Activated T-helper 2 cell treated with anti-CD3 and anti-CD28 coated beads, Interferon-gamma antibody, Interleukin-2, Interleukin-4, amounts not matched to agents 10 μg/mL and 5 μg/mL and 100 μg/mL, durations not matched to agents 14 hours and 24 hours and 36 hours (primary cell): ENCODE measurements at regions of chr5 and their contacts with region 1.

Region 1: GRCh38 chr5:61331407-61332357 is at the start of gene ZSWIM6:
- DNase-seq: peak; percentile 96
- H3K4me3 Mint-ChIP-seq: peak within 1 kb of the TSS; percentile 95
- H3K27ac Mint-ChIP-seq: peak within 1 kb of the TSS; percentile 96
- H3K4me1 Mint-ChIP-seq: peaks cover 49% of the 10 kb centered on the region
- H3K27me3 Mint-ChIP-seq: peaks cover 33% of the 10 kb centered on the region
- total RNA-seq, gene ZSWIM6: 8.9 TPM in 2 replicates

Region 2: DNA sequence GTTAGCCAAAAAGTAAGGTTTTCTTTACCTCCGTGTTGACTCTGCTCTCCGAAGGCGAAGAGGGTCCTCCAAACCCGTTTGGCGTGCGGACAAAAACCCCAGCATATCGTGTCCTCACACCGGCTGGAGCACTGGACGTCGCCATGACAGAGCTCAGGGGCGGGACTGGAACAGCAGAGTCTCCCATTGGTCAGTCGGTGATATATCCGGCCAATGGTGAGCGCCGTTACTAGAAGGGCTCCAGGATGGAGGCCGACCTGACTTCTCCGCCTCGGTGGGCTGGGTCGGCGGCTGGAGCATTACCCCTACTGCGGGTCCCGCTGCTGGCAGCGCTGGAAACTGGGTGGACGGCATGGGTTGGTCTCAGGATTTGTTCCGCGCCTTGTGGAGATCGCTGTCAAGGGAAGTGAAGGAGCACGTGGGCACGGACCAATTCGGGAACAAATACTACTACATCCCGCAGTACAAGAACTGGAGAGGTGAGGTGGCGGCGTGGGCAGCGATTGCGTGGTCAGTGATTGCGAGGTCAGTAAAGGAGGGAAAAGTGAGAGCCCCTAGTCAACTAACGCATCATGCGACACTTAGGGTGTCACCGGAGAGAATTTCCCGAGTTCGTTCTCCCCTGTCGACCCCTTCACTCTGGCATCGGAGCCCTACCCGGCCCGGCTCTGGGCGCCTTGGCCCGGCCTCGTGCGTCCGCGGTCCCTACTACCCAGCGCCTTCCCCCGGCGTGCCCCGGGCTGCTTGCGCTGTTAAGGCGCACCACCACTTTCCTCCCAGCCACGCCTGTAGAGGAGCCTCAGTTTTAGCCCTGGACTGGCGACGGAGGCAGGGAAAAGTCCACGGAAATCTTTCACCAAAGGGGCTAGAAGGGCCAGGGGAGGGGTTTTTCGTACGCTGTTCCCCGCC is 386.5 kb before region 1 on chr5 and contains the starts of genes ERCC8 and NDUFAF2:
- intact Hi-C with region 1: loop called (anchors 2 kb)
- DNase-seq: peak; percentile 85
- H3K4me3 Mint-ChIP-seq: no peak within 1 kb of the TSS
- H3K27ac Mint-ChIP-seq: peak within 1 kb of the TSS; percentile 75
- H3K4me1 Mint-ChIP-seq: peaks cover 19% of the 10 kb centered on the region
- H3K27me3 Mint-ChIP-seq: no peaks in the 10 kb centered on the region
- total RNA-seq, gene ERCC8: 9.3 and 10.2 TPM in 2 replicates
- total RNA-seq, gene NDUFAF2: 32.6 and 39.8 TPM in 2 replicates

Region 3: DNA sequence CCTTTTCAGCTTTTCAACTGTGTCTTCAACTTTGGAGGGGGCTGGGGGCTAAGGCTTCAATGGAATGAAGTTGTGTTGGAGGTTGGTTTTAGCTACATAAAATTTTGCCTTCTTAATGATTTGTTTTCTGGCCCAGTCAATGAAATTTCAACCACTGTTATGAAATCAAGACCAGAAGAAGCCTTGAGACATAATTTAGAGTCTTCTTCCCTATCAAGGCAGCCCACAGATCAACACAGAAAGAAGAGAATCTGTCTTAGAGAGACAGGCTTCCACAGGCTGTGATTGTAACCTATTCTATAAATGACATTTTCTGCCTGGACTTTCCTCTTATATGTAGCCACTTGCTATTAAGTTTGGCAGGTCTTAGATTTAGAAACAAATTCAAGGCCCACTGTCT is 46.2 kb before region 1 on chr5:
- intact Hi-C with region 1: loop called (anchors 2 kb)
- DNase-seq: no peak
- H3K4me3 Mint-ChIP-seq: no peak overlapping the region
- H3K27ac Mint-ChIP-seq: no peak overlapping the region
- H3K4me1 Mint-ChIP-seq: peaks cover 6% of the 10 kb centered on the region
- H3K27me3 Mint-ChIP-seq: no peaks in the 10 kb centered on the region

Region 4: DNA sequence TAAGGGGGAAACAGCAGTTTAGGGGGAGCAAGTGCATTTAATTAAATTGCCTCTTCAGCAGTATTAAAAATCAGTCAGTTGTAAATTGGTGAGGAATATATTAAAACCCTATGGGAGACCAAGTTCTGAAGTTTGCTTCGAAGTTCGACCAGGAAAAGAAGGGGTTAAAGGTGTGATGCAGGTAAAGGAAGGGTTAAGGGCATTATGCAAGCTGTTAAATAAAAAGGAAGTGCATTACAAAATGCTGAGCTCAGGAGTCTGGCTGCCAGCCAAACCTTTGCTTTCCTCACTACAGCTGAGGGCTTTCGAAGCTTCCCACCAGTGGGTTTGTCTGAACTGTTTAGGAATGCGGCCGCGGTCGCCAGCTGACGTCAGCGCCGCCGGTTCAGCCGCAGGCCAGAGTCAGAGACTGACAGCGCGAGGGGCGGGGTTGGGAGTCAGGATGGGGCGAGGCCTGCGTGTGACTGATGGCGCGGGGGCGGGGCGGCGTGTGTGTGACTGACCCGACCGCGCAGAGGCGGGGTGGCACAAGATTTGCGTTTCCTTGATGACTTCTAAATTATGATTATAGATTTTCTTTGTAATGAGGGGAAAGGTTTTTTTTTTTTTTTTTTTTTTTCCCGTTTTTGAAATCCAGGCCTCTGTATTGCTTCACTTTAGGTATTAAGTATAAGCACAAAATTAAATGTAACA is 76.9 kb after region 1 on chr5:
- intact Hi-C with region 1: loop called (anchors 1 kb)
- DNase-seq: peak; percentile 89
- H3K4me3 Mint-ChIP-seq: peak overlapping the region; percentile 54
- H3K27ac Mint-ChIP-seq: no peak overlapping the region
- H3K4me1 Mint-ChIP-seq: peaks cover 20% of the 10 kb centered on the region
- H3K27me3 Mint-ChIP-seq: peaks cover 5% of the 10 kb centered on the region

Region 5: GRCh38 chr5:61609840-61610677 is 278.4 kb after region 1 on chr5:
- intact Hi-C with region 1: no loop called
- DNase-seq: no peak
- H3K4me3 Mint-ChIP-seq: no peak overlapping the region
- H3K27ac Mint-ChIP-seq: no peak overlapping the region
- H3K4me1 Mint-ChIP-seq: no peaks in the 10 kb centered on the region
- H3K27me3 Mint-ChIP-seq: peaks cover 4% of the 10 kb centered on the region

Region 6: GRCh38 chr5:62305715-62306322 is 974.1 kb after region 1 on chr5 and contains the start of gene KIF2A:
- intact Hi-C with region 1: loop called (anchors 5 kb)
- DNase-seq: peak; percentile 96
- H3K4me3 Mint-ChIP-seq: peak within 1 kb of the TSS; percentile 99
- H3K27ac Mint-ChIP-seq: peak within 1 kb of the TSS; percentile 97
- H3K4me1 Mint-ChIP-seq: peaks cover 48% of the 10 kb centered on the region
- H3K27me3 Mint-ChIP-seq: no peaks in the 10 kb centered on the region
- total RNA-seq, gene KIF2A: 285 and 294 TPM in 2 replicates